ENCODE measurements at regions of chr11 and their contacts with region 1.

Region 1: DNA sequence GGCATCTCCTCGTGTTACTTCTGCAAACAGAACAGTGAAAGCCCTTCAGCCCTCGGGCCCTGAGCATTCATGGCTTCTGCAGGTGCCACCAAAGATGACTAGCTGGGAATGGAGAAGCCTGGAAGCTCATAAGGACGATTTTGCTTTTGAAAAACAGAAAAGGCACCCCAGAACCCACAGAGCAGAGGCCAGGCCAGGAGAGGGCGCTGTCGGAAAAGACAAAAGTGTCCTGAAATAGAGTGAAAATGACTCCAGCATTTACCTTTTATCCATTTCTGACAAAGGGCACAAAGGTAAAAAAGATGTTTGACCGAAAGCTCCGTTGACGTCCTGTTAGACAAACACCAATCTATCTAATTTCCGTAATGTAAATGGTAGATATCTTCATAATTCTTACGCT is 37.6 kb downstream of the ZNF195 start:
- DNase-seq: peak; percentile 46 to 92
- H3K4me3 ChIP-seq: no peak overlapping the region
- H3K27ac ChIP-seq: no peak overlapping the region
- H3K4me1 ChIP-seq: no peaks in the 10 kb centered on the region
- H3K27me3 ChIP-seq: no peaks in the 10 kb centered on the region
- CTCF ChIP-seq: peak; percentile 74 to 87 (median 86)
- EP300 ChIP-seq: no peak
- POLR2A ChIP-seq: no peak
- RAD21 ChIP-seq: peak; percentile 89 to 91

Region 2: GRCh38 chr11:3021125-3021524 is 320.2 kb before region 1 on chr11:
- CTCF ChIA-PET with region 1: no interaction called
- POLR2A ChIA-PET with region 1: no interaction called
- DNase-seq: no peak
- H3K4me3 ChIP-seq: no peak overlapping the region
- H3K27ac ChIP-seq: no peak overlapping the region
- H3K4me1 ChIP-seq: no peaks in the 10 kb centered on the region
- H3K27me3 ChIP-seq: no peaks in the 10 kb centered on the region
- CTCF ChIP-seq: peak; percentile 57 to 82 (median 78)
- EP300 ChIP-seq: no peak
- POLR2A ChIP-seq: no peak; a peak in 1 of 3 replicates
- RAD21 ChIP-seq: peak; percentile 72 to 79

Region 3: GRCh38 chr11:3353066-3353465 is 11.8 kb after region 1 on chr11:
- CTCF ChIA-PET with region 1: interaction called, 25 read pairs
- POLR2A ChIA-PET with region 1: interaction called, 29 read pairs
- DNase-seq: no peak
- H3K4me3 ChIP-seq: no peak overlapping the region
- H3K27ac ChIP-seq: no peak overlapping the region
- H3K4me1 ChIP-seq: no peaks in the 10 kb centered on the region
- H3K27me3 ChIP-seq: no peaks in the 10 kb centered on the region
- CTCF ChIP-seq: no peak
- EP300 ChIP-seq: no peak
- POLR2A ChIP-seq: no peak
- RAD21 ChIP-seq: no peak

Region 4: GRCh38 chr11:3359092-3359824 is 18.0 kb after region 1 on chr11:
- CTCF ChIA-PET with region 1: interaction called, 8 read pairs
- POLR2A ChIA-PET with region 1: interaction called, 29 read pairs
- DNase-seq: no peak
- H3K4me3 ChIP-seq: peak overlapping the region in 1 of 4 experiments; percentile 36; a peak in 1 of 8 replicates
- H3K27ac ChIP-seq: no peak overlapping the region
- H3K4me1 ChIP-seq: no peaks in the 10 kb centered on the region
- H3K27me3 ChIP-seq: no peaks in the 10 kb centered on the region
- CTCF ChIP-seq: no peak
- EP300 ChIP-seq: no peak
- POLR2A ChIP-seq: peak; percentile 38; a peak in 2 of 3 replicates
- RAD21 ChIP-seq: no peak

Region 5: DNA sequence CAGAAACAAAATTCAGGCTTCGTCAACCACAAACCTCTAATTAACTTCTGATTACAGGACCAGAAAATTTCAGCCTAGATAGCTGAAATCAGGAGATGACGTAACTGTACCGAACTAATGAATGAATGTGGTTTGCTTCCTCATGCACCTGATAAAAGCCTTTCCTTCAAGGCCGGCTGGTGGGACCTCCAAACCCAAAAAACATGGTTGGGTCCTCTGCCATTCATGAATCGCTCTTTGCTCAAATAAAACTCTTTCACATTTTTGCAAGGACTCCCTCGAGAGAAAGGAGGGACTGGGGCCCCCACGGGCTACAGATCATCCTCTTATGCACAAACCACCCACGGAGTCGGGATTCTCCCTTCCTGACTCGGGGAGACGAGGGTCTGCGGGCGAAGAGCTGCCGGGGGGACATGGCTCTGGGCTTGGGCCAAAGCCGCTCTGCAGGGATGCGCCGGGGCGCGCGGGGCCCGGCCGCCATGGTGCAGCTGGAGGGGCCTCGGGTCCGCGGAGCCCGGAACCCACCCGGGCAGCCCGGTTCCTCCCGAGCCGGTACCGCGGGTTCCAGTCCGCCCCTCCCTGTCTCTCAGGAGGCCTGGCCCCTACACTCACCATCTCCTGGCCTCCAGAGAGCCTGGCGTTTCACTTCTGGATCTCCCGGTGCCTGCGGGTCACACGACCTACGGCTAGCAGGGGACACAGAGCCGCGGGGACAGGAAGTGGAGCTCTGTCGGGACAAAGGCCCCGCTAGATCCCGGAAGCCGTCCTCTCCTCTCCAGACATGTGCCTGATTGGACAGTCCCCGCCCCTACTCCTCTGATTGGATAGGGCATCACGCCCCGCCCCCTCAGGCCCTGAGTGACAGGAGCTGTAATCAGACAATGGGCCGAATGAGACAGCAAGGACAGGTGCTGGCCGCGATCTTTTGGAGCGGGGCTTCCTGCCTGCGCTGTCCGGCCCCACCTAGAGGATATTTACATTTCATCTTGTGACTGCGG is 37.4 kb after region 1 on chr11 and contains the start of gene ZNF195:
- CTCF ChIA-PET with region 1: interaction called, 44 read pairs
- POLR2A ChIA-PET with region 1: interaction called, 24 read pairs
- DNase-seq: peak; percentile 96 to 99
- H3K4me3 ChIP-seq: peak within 1 kb of the TSS; percentile 94 to 100 (median 97)
- H3K27ac ChIP-seq: peak within 1 kb of the TSS; percentile 88
- H3K4me1 ChIP-seq: peaks cover 7 to 23% (median 13%) of the 10 kb centered on the region in 4 experiments; a peak in 5 of 7 replicates
- H3K27me3 ChIP-seq: no peaks in the 10 kb centered on the region
- CTCF ChIP-seq: no peak
- EP300 ChIP-seq: no peak
- POLR2A ChIP-seq: peak; percentile 83 to 97
- RAD21 ChIP-seq: no peak
- total RNA-seq, gene ZNF195: 80.5 and 88.6 TPM in 2 replicates

Region 6: GRCh38 chr11:3412837-3413236 is 71.5 kb after region 1 on chr11:
- CTCF ChIA-PET with region 1: interaction called, 28 read pairs
- POLR2A ChIA-PET with region 1: interaction called, 4 read pairs
- DNase-seq: no peak
- H3K4me3 ChIP-seq: no peak overlapping the region
- H3K27ac ChIP-seq: no peak overlapping the region
- H3K4me1 ChIP-seq: no peaks in the 10 kb centered on the region
- H3K27me3 ChIP-seq: no peaks in the 10 kb centered on the region
- CTCF ChIP-seq: no peak
- EP300 ChIP-seq: no peak
- POLR2A ChIP-seq: no peak
- RAD21 ChIP-seq: no peak

Measured in H1 (cell line).